K562 (cell line): ENCODE measurements at regions of chr10 and their contacts with region 1.

Region 1: GRCh38 chr10:6514844-6515780 is 65.0 kb downstream of the PRKCQ start:
- DNase-seq: peak in 2 of 4 experiments; percentile 56 to 66
- ATAC-seq: peak; percentile 85
- H3K4me3 ChIP-seq: no peak overlapping the region
- H3K27ac ChIP-seq: peak overlapping the region; percentile 70
- H3K4me1 ChIP-seq: peaks cover 0 to 21% of the 10 kb centered on the region in 2 experiments; a peak in 4 of 5 replicates
- H3K27me3 ChIP-seq: no peaks in the 10 kb centered on the region; a peak in 1 of 5 replicates
- CTCF ChIP-seq: no peak
- EP300 ChIP-seq: peak; percentile 6; the same call in 1 of the 2 replicates
- POLR2A ChIP-seq: no peak
- RAD21 ChIP-seq: no peak; a peak in 1 of 4 replicates

Region 2: GRCh38 chr10:6348096-6348874 is 166.8 kb before region 1 on chr10:
- CTCF ChIA-PET with region 1: no interaction called
- POLR2A ChIA-PET with region 1: no interaction called
- in situ Hi-C with region 1: no loop called
- intact Hi-C with region 1: no loop called
- DNase-seq: no peak
- ATAC-seq: no peak
- H3K4me3 ChIP-seq: no peak overlapping the region
- H3K27ac ChIP-seq: no peak overlapping the region
- H3K4me1 ChIP-seq: no peaks in the 10 kb centered on the region
- H3K27me3 ChIP-seq: peaks cover 18 to 42% of the 10 kb centered on the region in 2 experiments
- CTCF ChIP-seq: no peak
- EP300 ChIP-seq: no peak
- POLR2A ChIP-seq: no peak
- RAD21 ChIP-seq: no peak

Region 3: DNA sequence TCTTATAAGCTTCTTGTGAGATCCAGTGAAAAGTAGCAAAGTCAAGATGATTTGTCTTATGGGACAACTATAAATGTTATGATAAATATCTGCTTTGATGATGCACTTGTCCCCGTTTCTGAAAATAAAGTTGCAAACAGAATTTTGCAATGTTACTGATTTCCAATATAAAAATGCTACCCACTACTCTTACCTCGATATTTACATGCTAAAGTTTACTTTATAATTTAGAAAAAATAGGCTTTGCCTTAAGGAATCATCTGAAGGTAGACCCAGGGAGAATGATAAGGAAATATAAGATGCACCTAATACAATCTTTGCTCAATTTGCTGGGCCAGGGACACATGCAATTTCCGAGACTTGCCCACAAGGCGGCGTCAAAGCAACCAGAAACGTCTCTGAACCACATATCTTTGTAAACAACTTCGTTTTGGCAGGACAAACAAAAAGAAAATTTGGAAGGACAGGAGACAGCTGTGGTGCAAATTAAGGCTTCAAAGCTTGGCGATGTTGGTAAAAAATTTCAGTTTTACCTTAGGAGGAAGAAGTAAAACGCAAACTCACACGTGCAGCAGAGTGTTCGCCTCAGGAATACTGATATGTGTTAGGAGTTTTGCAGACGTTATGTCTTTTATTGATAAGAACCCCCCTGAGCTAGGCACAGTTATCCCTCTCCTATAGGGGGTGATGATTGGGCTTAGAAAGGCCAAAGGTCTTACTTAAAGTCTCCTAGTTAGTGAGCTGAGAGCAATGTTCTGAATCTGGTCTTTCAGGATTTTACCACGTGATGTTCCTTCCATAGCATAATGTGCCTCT is 69.4 kb before region 1 on chr10:
- CTCF ChIA-PET with region 1: no interaction called
- POLR2A ChIA-PET with region 1: no interaction called
- in situ Hi-C with region 1: no loop called
- intact Hi-C with region 1: loop called (anchors 5 kb)
- DNase-seq: peak; percentile 54 to 76 (median 58)
- ATAC-seq: peak; percentile 91
- H3K4me3 ChIP-seq: no peak overlapping the region
- H3K27ac ChIP-seq: peak overlapping the region; percentile 61; the same call in 2 of the 3 replicates
- H3K4me1 ChIP-seq: peaks cover 0 to 4% of the 10 kb centered on the region in 2 experiments; a peak in 2 of 5 replicates
- H3K27me3 ChIP-seq: no peaks in the 10 kb centered on the region
- CTCF ChIP-seq: peak; percentile 74 to 84 (median 81)
- EP300 ChIP-seq: no peak
- POLR2A ChIP-seq: no peak
- RAD21 ChIP-seq: peak; percentile 76 to 89

Region 4: DNA sequence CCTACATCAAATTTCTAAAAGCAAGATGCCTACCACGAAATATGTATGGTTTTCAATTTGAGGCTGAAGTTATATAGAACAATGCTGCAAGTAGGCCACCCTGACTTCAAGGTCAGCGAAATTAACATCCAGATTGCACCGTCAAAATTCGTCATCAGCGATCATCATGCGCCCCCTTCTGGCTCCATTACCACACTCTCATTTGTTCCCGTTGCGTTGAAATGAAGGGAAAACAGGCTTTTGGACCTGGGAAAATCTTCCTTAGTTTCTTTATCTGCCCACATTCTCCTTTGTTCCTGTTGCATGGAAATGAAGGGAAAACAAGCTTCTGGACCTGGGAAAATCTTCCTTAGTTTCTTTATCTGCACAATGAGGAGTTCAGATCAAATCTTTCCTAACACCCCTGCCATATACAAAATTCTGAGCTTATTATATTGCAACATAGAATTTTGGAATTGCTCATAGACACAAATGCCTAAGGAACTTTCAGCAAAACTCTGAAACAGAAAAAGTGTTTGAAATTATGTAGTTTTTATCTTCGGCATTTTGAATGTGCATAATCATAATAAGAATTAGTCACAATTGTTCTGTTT is 163.2 kb after region 1 on chr10:
- CTCF ChIA-PET with region 1: no interaction called
- POLR2A ChIA-PET with region 1: no interaction called
- in situ Hi-C with region 1: no loop called
- intact Hi-C with region 1: no loop called
- DNase-seq: peak; percentile 49 to 68 (median 50)
- ATAC-seq: peak; percentile 81
- H3K4me3 ChIP-seq: no peak overlapping the region
- H3K27ac ChIP-seq: no peak overlapping the region
- H3K4me1 ChIP-seq: no peaks in the 10 kb centered on the region
- H3K27me3 ChIP-seq: peaks cover 3 to 16% of the 10 kb centered on the region in 2 experiments; a peak in 3 of 5 replicates
- CTCF ChIP-seq: peak; percentile 75 to 83 (median 83)
- EP300 ChIP-seq: no peak
- POLR2A ChIP-seq: no peak
- RAD21 ChIP-seq: peak; percentile 63 to 83